Right ventricle myocardium superior (tissue), 1 donor: ENCODE measurements at regions of chr5 and their contacts with region 1.

Region 1: GRCh38 chr5:78008356-78008967 is 232.3 kb upstream of the TBCA start:
- DNase-seq: no peak
- ATAC-seq: peak; percentile 69

Region 2: GRCh38 chr5:77560677-77561263 is 447.7 kb before region 1 on chr5:
- intact Hi-C with region 1: loop called (anchors 10 kb)
- DNase-seq: no peak
- ATAC-seq: peak; percentile 46

Region 3: GRCh38 chr5:77645158-77645994 is 363.1 kb before region 1 on chr5:
- intact Hi-C with region 1: loop called (anchors 10 kb)
- DNase-seq: no peak
- ATAC-seq: peak; percentile 80